Prostate gland (tissue), 2 donors: ENCODE measurements at regions of chr2 and their contacts with region 1.

Region 1: DNA sequence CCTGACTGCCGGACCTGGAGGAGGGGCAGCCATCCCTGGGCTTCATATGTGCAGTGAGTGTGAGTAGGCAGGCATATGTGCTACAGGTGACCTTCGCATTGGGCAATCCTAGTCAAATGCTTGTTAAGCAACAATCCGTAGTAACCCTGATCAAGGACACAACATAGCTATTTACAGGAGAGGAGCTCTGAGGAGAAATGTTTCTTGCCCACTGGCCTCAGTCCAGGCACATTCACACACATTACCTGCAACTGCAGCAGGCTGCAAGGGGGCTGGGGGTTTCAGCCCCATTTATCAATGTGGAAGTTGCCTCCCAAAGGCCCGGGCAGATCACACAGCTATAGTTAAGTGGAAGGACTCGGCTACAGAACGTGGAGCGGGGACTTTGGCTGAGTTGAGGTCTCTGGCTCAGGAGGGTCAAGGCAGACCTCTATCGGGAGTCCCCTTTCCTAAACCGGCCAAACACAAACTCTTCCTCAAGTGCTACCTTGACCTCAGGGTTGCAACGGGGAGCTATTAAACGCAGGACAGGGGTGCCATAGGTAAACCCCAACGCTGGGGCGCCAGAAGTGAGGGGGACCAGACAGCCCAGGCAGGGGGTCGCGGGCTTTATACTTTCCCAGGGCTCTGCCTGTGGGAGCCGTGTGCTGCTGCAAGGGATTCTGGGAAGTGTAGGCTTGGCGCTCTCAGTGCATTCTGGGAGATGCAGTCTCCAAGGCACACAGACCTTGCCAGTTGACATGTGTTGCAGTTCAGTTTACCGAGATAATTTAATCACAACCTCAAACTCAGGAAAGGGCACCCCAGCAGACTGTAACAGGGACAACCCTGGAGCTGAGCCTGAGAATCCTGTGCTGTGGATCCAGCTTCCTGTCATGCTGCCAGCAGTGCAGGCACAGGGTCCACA is 9.4 kb downstream of the KHK start:
- DNase-seq: peak; percentile 38
- H3K4me3 ChIP-seq: no peak overlapping the region
- H3K27ac ChIP-seq: no peak overlapping the region
- H3K4me1 ChIP-seq: peaks cover 3% of the 10 kb centered on the region
- H3K27me3 ChIP-seq: no peaks in the 10 kb centered on the region
- CTCF ChIP-seq: no peak
- POLR2A ChIP-seq: no peak

Region 2: DNA sequence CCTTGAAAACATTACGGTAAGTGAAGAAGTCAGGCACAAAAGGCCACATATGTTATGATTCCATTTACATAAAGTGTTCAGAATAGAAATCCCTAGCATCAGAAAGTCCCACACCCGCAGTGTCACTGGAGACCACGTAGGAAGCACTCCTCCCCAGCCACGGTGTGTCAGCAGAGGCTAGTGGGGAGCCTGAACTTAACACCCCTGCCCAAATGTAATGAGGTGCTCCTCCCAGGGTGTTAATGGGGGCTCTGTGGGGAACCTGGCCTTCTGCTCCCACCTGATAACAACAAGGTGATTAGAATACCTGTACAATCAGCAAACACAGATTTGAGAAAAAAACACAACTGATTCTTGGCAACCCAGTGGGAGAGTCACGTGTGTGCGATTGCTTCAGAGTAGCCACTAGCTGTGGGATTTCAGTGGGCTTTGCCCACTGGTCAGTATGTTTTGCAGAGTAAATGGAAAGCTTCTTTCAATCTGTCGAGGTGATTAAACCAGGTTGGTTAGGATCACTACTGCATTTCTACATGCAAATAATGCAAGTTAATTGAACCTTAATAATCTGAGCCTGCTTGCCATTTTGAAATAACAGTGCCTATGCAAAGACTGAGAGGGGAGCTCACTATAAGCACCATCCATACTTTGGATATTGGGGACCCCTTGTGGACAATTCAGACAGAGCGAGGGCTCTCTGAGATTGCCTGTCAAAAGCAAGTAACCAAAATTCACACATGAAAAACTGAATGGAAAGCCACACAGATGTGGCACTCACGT is 95.2 kb after region 1 on chr2:
- intact Hi-C with region 1: loop called (anchors 1 kb)
- DNase-seq: peak; percentile 21
- H3K4me3 ChIP-seq: no peak overlapping the region
- H3K27ac ChIP-seq: no peak overlapping the region
- H3K4me1 ChIP-seq: no peaks in the 10 kb centered on the region
- H3K27me3 ChIP-seq: no peaks in the 10 kb centered on the region
- CTCF ChIP-seq: peak in 3 of 4 experiments; percentile 26 to 46 (median 45)
- POLR2A ChIP-seq: no peak

Region 3: GRCh38 chr2:27281855-27282559 is 186.0 kb after region 1 on chr2 and contains the start of gene TRIM54:
- intact Hi-C with region 1: loop called (anchors 5 kb)
- DNase-seq: no peak
- H3K4me3 ChIP-seq: no peak within 1 kb of the TSS
- H3K27ac ChIP-seq: no peak within 1 kb of the TSS
- H3K4me1 ChIP-seq: no peaks in the 10 kb centered on the region
- H3K27me3 ChIP-seq: no peaks in the 10 kb centered on the region
- CTCF ChIP-seq: no peak
- POLR2A ChIP-seq: no peak
- total RNA-seq, gene TRIM54: 2.8 to 17.9 TPM